ENCODE measurements at regions of chr14 and their contacts with region 1.

Region 1: DNA sequence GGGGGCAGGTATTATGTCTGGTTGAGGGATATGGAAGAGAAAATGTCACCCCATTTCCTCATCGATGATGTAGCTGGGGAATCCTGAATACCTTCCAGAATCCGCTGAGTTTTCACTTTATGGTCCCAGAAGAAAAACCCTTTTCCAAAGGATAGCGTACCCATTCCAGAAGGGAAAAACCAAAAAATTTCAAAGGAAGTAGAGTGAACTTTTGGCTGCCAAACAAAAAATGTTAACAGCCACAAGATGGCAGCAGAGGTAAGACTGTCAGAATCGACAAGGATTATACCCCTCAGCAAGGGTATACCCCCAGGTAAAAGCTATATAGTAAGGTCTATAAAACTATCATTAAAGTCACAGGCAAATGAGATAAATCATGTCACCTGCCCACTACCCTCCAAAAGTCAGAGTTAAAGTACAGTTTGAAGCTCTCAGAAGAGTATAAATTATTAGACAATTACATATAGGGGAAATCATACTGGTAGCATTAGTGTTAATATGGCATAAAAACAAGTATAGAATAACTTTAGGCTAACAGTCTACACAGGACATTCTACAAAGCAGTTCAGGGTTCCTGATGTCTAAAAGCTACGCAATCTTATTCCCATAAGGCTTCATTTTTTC is 18.0 kb downstream of the ACIN1 start:
- DNase-seq: peak; percentile 47
- ATAC-seq: no peak
- H3K4me3 ChIP-seq: no peak overlapping the region
- H3K27ac ChIP-seq: no peak overlapping the region
- H3K4me1 ChIP-seq: peaks cover 18% of the 10 kb centered on the region
- H3K27me3 ChIP-seq: no peaks in the 10 kb centered on the region
- CTCF ChIP-seq: peak; percentile 60
- POLR2A ChIP-seq: no peak
- RAD21 ChIP-seq: peak; percentile 55

Region 2: DNA sequence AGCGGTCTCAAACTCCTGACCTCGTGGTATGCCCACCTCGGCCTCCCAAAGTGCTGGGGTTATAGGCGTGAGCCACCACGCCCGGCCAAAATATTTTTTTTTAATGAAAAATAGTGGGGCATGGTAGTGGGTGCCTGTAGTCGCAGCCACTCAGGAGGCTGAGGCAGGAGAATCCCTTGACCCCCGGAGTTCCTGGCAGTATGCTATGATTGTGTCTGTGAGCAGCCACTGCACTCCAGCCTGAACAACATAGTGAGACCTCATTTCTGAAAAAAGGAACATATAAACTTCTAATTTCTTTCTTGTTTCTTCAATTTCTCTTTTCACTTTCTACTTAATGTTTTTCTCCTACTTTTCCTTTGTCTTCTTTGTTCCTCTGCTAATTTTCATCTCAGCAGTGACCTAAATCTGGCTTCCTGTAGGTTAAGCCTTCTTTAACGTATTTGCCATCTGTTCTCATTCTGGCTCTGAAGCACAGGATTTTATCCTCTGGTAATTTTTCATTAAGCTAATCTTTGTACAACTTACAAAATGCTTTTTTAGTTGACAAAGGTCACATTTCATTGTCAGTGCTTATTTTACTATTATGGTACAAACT is 1801.5 kb before region 1 on chr14:
- CTCF ChIA-PET with region 1: no interaction called
- POLR2A ChIA-PET with region 1: interaction called, 14 read pairs
- dilution Hi-C with region 1: no loop called
- in situ Hi-C with region 1: no loop called
- intact Hi-C with region 1: no loop called
- DNase-seq: no peak
- ATAC-seq: no peak
- H3K4me3 ChIP-seq: no peak overlapping the region
- H3K27ac ChIP-seq: no peak overlapping the region
- H3K4me1 ChIP-seq: no peaks in the 10 kb centered on the region
- H3K27me3 ChIP-seq: no peaks in the 10 kb centered on the region
- CTCF ChIP-seq: no peak
- POLR2A ChIP-seq: no peak
- RAD21 ChIP-seq: no peak

Region 3: DNA sequence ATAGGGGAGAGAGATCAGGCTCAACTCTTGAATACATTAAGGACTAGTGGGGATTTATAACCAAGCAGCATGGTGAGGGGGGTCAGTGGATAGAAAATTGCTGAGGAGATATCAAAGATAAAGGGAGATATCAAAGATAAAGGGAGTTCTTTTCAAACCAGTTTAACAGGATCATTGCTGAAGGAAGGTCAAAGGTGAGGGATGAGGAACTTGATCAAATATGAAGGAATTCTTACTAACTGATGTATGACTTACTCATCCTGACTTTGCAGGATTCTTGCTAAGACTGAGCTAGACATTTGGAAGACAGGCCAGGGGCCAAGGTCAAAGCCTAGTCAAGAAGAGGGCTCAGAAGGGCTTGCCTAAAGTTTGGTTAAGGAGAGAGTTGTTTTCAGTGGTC is 474.0 kb before region 1 on chr14:
- CTCF ChIA-PET with region 1: no interaction called
- POLR2A ChIA-PET with region 1: no interaction called
- dilution Hi-C with region 1: no loop called
- in situ Hi-C with region 1: no loop called
- intact Hi-C with region 1: no loop called
- DNase-seq: peak; percentile 57
- ATAC-seq: no peak
- H3K4me3 ChIP-seq: no peak overlapping the region
- H3K27ac ChIP-seq: no peak overlapping the region
- H3K4me1 ChIP-seq: peaks cover 9% of the 10 kb centered on the region
- H3K27me3 ChIP-seq: no peaks in the 10 kb centered on the region
- CTCF ChIP-seq: no peak
- POLR2A ChIP-seq: no peak
- RAD21 ChIP-seq: no peak

Region 4: GRCh38 chr14:23095196-23096108 is 18.6 kb after region 1 on chr14 and contains the start of gene C14orf119:
- CTCF ChIA-PET with region 1: interaction called, 8 read pairs
- POLR2A ChIA-PET with region 1: interaction called, 9 read pairs
- dilution Hi-C with region 1: no loop called
- in situ Hi-C with region 1: no loop called
- intact Hi-C with region 1: loop called (anchors 2 kb)
- DNase-seq: peak; percentile 99
- ATAC-seq: peak; percentile 91
- H3K4me3 ChIP-seq: peak within 1 kb of the TSS; percentile 67
- H3K27ac ChIP-seq: peak within 1 kb of the TSS; percentile 97
- H3K4me1 ChIP-seq: peaks cover 3% of the 10 kb centered on the region; the same call in 1 of the 2 replicates
- H3K27me3 ChIP-seq: no peaks in the 10 kb centered on the region
- CTCF ChIP-seq: no peak
- POLR2A ChIP-seq: peak; percentile 91; the same call in 1 of the 2 replicates
- RAD21 ChIP-seq: no peak
- total RNA-seq, gene C14orf119: 61.9 and 83.7 TPM in 2 replicates

Region 5: DNA sequence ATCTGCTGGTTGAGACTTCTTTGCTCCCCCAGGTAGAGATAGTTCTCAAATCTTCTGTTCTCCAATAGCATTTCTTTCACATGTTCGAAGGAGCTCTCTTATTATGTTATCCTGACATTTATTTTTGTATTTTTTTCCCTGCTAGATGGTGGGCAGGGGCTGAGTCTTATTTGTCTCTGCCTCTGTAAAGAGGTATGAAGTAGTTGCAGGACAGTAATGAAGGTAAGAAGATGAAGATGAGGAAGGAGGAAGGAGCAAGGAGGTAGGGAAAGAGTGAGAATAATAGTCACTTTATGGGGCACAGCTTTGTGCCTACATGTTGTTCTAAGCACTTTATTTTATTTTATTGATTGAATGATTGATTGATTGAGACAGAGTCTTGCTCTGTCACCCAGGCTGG is 32.9 kb after region 1 on chr14:
- CTCF ChIA-PET with region 1: interaction called, 6 read pairs
- POLR2A ChIA-PET with region 1: no interaction called
- dilution Hi-C with region 1: no loop called
- in situ Hi-C with region 1: no loop called
- intact Hi-C with region 1: loop called (anchors 1 kb)
- DNase-seq: no peak
- ATAC-seq: no peak
- H3K4me3 ChIP-seq: no peak overlapping the region
- H3K27ac ChIP-seq: no peak overlapping the region
- H3K4me1 ChIP-seq: peaks cover 22% of the 10 kb centered on the region
- H3K27me3 ChIP-seq: no peaks in the 10 kb centered on the region
- CTCF ChIP-seq: no peak
- POLR2A ChIP-seq: no peak
- RAD21 ChIP-seq: no peak

Region 6: DNA sequence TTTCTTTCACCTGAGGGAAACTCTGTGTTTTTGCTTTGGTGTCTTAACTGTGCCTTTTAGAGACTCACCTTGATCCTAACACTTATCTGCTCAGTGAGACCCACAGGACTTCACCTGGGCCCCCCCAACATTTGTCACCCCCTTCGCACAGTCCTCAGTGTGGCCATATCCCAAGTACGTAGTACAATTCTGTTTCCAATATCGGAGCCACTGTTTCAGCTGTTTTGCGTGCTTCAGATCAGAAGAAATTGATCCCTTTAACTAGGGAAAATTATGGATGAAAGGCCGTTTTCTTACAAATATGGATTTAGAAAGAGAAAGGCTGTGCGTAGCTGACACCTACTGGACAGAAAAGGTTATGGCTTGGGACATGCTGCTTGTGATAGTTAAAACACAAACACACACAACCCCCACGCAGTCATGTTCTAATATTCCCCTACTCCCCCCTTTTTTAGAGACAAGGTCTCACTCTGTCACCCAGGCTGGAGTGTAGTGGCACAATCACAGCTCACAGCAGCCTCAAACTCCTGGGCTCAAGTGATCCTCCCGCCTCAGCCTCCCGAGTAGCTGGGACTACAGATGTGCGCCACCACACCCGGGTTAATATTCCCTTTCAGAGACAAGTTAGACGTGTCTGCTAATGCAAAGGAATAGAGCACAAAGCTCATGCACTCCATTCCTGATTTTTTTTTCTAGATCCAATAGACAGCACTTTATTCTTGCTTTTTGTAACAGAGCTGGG is 110.2 kb after region 1 on chr14:
- CTCF ChIA-PET with region 1: no interaction called
- POLR2A ChIA-PET with region 1: no interaction called
- dilution Hi-C with region 1: no loop called
- in situ Hi-C with region 1: no loop called
- intact Hi-C with region 1: loop called (anchors 5 kb)
- DNase-seq: peak; percentile 76
- ATAC-seq: peak; percentile 88
- H3K4me3 ChIP-seq: no peak overlapping the region
- H3K27ac ChIP-seq: no peak overlapping the region
- H3K4me1 ChIP-seq: no peaks in the 10 kb centered on the region
- H3K27me3 ChIP-seq: peaks cover 15% of the 10 kb centered on the region
- CTCF ChIP-seq: peak; percentile 95
- POLR2A ChIP-seq: no peak
- RAD21 ChIP-seq: peak; percentile 94